ENCODE measurements at regions of chr12 and their contacts with region 1.

Region 1: DNA sequence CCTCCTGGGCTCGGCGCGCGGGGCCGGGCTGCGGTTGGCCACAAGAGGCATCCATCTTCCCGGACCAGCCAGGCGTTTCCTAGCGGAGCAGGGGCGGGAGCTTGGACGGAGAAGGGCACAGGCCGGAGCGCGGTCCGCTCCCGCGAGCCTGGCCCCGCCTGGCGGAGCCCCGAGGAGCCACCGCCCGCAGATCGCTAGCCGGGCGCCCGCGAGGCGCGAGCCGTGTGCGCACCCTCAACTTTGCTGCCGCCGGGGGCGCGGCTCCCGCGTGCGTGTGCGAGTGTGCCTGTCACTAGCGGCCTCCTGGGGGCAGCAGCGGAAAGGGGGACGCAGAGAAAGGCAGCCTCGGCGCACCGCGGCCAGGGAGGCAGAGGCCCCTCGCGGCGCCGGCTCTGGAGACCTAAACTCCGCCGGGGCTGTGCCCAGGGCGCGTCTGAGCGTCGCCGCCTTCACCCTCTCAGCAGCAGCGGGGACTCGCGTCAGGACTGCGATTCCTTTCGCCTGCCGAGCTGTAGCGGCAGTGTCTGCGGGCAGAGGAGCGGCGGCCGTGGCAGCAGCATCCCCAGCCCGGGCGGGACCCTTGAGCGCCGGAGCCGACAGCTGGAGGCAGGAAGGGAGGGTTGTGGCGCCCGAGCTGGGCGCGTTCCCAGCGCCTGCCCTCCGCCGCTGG is 644 bp upstream of the SRGAP1 start:
- DNase-seq: peak; percentile 94
- ATAC-seq: peak; percentile 92

Region 2: GRCh38 chr12:63792338-63792737 is 51.5 kb before region 1 on chr12:
- intact Hi-C with region 1: no loop called
- DNase-seq: no peak
- ATAC-seq: no peak

Region 3: GRCh38 chr12:64110864-64111263 is 267.0 kb after region 1 on chr12:
- intact Hi-C with region 1: loop called (anchors 1 kb)
- DNase-seq: no peak
- ATAC-seq: no peak

Region 4: GRCh38 chr12:64256166-64256800 is 412.4 kb after region 1 on chr12:
- intact Hi-C with region 1: loop called (anchors 5 kb)
- DNase-seq: no peak
- ATAC-seq: peak; percentile 24

Measured in sciatic nerve (tissue), 2 donors.